ENCODE measurements at regions of chr14 and their contacts with region 1.

Region 1: GRCh38 chr14:50773632-50774541 is 57.1 kb downstream of the NIN start:
- DNase-seq: no peak
- ATAC-seq: peak in 6 of 8 donors; percentile 27 to 64 (median 52)
- H3K4me3 ChIP-seq: no peak overlapping the region
- H3K27ac ChIP-seq: peak overlapping the region in 2 of 10 donors; percentile 10 to 28
- H3K4me1 ChIP-seq: peaks cover 0 to 35% (median 14%) of the 10 kb centered on the region in 9 donors
- H3K27me3 ChIP-seq: no peaks in the 10 kb centered on the region
- CTCF ChIP-seq: peak; percentile 16 to 74 (median 70)

Region 2: DNA sequence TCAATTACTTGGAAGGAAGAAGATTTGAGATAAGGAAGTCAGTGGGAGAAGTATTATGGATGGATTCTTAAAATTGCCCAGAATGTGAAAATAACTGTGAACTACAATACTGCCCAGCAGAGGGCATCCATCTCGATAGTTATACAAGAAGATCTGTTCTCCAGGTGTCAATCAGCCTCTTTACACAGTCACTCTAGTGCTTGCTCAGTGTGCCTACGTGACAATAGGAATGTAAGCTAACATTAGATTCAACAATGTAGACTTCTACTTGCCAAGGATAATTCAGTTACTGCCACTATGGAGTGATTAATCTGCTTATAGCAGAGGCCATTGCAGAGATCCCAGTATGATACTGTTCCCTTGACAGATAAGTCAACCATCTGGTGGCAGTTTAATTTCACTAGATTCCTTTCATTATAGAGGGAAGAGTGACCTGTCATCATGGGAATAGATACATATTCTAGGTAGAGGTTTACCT is 230.9 kb before region 1 on chr14:
- intact Hi-C with region 1: loop called in 2 of 10 experiments (anchors 2 to 5 kb)
- DNase-seq: peak in 1 of 2 donors; percentile 29
- ATAC-seq: peak in 3 of 8 donors; percentile 25 to 51 (median 33)
- H3K4me3 ChIP-seq: no peak overlapping the region
- H3K27ac ChIP-seq: no peak overlapping the region
- H3K4me1 ChIP-seq: peaks cover 0 to 3% (median 0%) of the 10 kb centered on the region in 9 donors
- H3K27me3 ChIP-seq: no peaks in the 10 kb centered on the region
- CTCF ChIP-seq: peak; percentile 21 to 66 (median 58)

Region 3: GRCh38 chr14:50599700-50600444 is 174.0 kb before region 1 on chr14:
- intact Hi-C with region 1: loop called in 9 of 10 experiments (anchors 2 to 10 kb)
- DNase-seq: no peak
- ATAC-seq: peak in 1 of 8 donors; percentile 31
- H3K4me3 ChIP-seq: no peak overlapping the region
- H3K27ac ChIP-seq: no peak overlapping the region
- H3K4me1 ChIP-seq: no peaks in the 10 kb centered on the region
- H3K27me3 ChIP-seq: no peaks in the 10 kb centered on the region
- CTCF ChIP-seq: peak; percentile 15 to 76 (median 62)

Region 4: DNA sequence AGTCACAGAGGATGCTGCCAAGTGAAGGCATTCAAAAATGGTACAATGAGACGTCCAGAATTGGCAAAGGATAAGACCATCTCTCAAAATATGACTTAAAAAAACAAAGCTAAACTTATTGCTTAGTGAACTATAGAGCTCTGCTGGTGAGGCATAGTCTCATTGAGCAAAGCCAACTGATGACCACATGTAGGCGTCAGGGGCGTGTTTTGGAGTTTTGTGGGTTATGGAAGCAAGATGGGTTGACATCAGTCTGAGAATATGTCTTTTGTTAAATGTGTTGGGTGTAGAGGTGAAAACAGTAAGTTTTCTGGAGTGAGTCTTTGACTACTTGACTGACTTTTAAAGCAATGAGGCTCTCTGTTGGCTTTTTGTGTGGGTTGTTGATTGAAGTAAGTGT is 166.7 kb before region 1 on chr14:
- intact Hi-C with region 1: loop called in 9 of 10 experiments (anchors 2 to 10 kb)
- DNase-seq: no peak
- ATAC-seq: no peak
- H3K4me3 ChIP-seq: no peak overlapping the region
- H3K27ac ChIP-seq: no peak overlapping the region
- H3K4me1 ChIP-seq: peaks cover 0 to 8% (median 0%) of the 10 kb centered on the region in 9 donors
- H3K27me3 ChIP-seq: no peaks in the 10 kb centered on the region
- CTCF ChIP-seq: no peak

Region 5: DNA sequence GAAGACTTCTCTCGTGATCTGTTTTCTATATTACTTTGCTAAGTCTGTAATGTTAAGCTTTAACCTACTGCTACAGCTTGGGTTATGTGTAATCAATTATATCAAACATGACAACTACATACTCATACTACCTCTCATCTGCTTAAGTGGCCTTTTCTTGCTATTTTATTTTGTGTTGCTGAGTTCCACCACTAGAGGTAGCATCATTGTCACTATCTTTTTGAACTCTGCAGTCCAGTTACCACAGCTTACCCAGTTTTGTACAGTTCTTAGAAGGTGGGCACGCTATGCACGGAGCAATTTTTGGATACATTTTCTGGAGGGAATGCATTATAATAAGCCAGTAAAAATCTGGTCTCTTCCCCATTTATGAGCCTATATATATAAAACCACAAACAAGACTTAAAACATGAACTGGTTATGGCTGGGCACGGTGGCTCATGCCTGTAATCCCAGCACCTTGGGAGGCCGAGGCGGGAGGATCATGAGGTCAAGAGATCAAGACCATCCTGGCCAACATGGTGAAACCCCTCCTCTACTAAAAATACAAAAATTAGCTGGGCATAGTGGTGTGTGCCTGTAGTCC is 154.2 kb before region 1 on chr14:
- intact Hi-C with region 1: loop called in 1 of 10 experiments (anchors 5 kb)
- DNase-seq: no peak
- ATAC-seq: peak in 4 of 8 donors; percentile 24 to 58 (median 48)
- H3K4me3 ChIP-seq: no peak overlapping the region
- H3K27ac ChIP-seq: no peak overlapping the region
- H3K4me1 ChIP-seq: peaks cover 0 to 8% (median 0%) of the 10 kb centered on the region in 9 donors
- H3K27me3 ChIP-seq: no peaks in the 10 kb centered on the region
- CTCF ChIP-seq: peak; percentile 32 to 72 (median 63)

Region 6: GRCh38 chr14:50726372-50727107 is 47.3 kb before region 1 on chr14:
- intact Hi-C with region 1: loop called in 1 of 10 experiments (anchors 10 kb)
- DNase-seq: no peak
- ATAC-seq: no peak
- H3K4me3 ChIP-seq: no peak overlapping the region
- H3K27ac ChIP-seq: peak overlapping the region in 1 of 10 donors; percentile 12
- H3K4me1 ChIP-seq: peaks cover 0 to 8% (median 0%) of the 10 kb centered on the region in 9 donors
- H3K27me3 ChIP-seq: no peaks in the 10 kb centered on the region
- CTCF ChIP-seq: no peak

Region 7: GRCh38 chr14:50860478-50861086 is 86.7 kb after region 1 on chr14:
- intact Hi-C with region 1: loop called in 3 of 10 experiments (anchors 2 to 5 kb)
- DNase-seq: peak; percentile 70 to 83
- ATAC-seq: peak; percentile 44 to 89 (median 80)
- H3K4me3 ChIP-seq: peak overlapping the region; percentile 30 to 63 (median 61)
- H3K27ac ChIP-seq: peak overlapping the region in 9 of 10 donors; percentile 24 to 86 (median 64)
- H3K4me1 ChIP-seq: peaks cover 0 to 14% (median 9%) of the 10 kb centered on the region in 9 donors
- H3K27me3 ChIP-seq: no peaks in the 10 kb centered on the region
- CTCF ChIP-seq: peak; percentile 69 to 86 (median 81)

Measured in heart right ventricle (tissue), 16 donors.